ENCODE measurements at regions of chr12 and their contacts with region 1.

Region 1: DNA sequence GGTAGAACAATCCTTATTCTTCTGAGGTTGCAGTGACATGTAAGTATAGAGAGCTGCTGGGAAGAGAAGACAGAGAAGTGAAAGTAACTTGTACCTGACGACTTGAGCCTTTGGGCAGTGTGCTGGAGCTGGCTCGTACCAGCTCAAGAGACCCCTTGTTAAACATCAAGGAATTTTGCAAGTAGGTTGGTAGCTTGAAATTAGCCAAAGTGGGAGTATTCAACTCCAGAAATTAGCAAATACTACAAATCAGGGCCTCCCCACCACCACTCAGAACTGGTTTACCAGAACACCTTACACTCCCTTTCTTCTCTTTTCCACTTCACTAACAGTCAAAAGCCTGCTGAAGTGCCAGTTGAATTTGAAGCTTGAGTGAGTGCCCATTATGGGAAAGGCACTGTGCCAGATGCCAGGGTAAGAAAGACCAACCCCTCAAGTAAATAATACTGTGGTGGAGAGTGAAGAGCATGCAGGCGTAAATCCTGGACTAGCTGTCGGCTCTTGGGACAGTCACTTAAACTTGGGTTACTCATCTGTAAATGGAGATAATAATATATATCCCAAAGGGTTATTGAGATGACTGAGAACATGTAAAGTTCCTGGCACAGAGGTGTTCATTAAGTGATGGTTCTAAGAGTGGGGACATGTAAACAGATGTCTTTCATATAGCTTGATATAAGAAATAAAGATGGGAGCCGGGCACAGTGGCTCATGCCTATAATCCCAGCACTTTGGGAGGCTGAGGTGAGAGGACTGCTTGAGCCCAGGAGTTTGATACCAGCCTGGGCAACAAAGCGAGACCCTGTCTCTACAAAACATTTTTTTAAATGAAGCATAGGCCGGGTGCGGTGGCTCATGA is 27.0 kb upstream of the EID3 start:
- DNase-seq: no peak
- ATAC-seq: no peak
- H3K4me3 ChIP-seq: peak overlapping the region; percentile 10; the same call in 1 of the 2 replicates
- H3K27ac ChIP-seq: no peak overlapping the region; the same call in 1 of the 2 replicates
- H3K4me1 ChIP-seq: peaks cover 6% of the 10 kb centered on the region
- H3K27me3 ChIP-seq: no peaks in the 10 kb centered on the region
- CTCF ChIP-seq: no peak
- POLR2A ChIP-seq: no peak
- RAD21 ChIP-seq: no peak

Region 2: DNA sequence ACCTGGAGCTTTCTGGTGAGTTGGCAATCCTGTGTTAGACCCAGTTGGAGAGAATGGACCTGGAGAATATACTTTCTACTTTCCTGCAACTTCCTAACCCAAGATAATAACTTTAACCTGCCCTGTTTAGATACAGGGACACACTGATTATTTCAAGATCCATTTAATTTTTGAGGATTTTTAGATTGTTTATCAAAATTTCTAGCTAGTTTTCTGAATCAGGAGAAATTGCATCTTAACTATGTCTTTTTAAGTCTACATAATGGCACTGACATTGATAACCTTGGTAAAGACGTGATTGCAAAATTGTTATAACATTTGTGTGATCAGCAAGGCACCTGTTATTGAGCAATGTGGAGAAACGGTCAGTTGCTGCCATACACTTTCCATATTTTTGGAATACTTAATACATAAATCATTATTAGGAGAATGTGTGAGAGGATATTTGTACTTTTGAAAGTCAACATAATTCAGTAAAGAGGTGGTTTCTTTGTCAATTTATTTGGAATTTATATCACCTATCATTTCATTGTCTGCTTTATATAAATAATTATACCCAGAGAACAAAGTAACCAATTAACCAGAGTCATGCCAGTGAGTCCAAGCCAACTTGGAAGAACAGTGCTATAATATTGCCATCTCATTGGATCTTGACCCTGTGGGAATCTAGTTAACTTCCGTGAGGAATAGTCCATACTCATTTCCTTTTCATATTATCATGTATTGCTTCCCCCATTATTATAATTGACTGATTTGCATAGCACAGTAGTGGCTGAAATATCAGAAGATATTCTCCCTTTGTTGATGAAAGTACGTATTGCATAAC is 166.8 kb before region 1 on chr12:
- CTCF ChIA-PET with region 1: no interaction called
- POLR2A ChIA-PET with region 1: no interaction called
- dilution Hi-C with region 1: no loop called
- in situ Hi-C with region 1: no loop called
- intact Hi-C with region 1: no loop called
- DNase-seq: no peak
- ATAC-seq: no peak
- H3K4me3 ChIP-seq: no peak overlapping the region
- H3K27ac ChIP-seq: no peak overlapping the region
- H3K4me1 ChIP-seq: peaks cover 2% of the 10 kb centered on the region; the same call in 1 of the 2 replicates
- H3K27me3 ChIP-seq: no peaks in the 10 kb centered on the region
- CTCF ChIP-seq: no peak
- POLR2A ChIP-seq: no peak
- RAD21 ChIP-seq: no peak

Region 3: DNA sequence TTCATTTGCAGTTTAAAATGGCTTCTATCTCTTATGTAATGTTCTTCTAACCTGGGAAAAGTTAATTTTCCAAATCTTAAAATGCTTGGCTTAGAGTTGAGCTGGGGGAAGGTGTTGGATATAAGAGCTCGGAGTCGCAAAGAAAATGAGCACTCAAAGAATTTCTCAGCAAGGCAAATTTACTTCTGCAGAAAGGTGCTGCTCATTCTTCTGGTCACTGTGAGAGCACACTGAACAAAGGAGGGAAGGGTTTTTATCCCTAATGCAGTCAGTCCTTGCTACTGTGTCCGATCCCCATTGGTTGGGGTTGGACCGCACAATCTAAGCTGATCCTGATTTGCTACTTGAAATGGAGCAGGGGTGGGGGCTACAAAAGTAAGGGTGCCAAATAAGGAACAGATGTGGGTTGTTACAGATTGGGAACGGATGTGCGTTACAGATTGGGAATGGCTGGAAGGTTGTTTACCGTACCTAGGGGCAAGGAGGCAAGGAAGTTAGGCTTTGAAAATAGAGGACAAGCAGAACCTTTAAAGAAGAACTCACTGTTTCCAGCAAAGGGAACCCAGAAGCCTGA is 41.5 kb before region 1 on chr12:
- CTCF ChIA-PET with region 1: no interaction called
- POLR2A ChIA-PET with region 1: no interaction called
- dilution Hi-C with region 1: no loop called
- in situ Hi-C with region 1: no loop called
- intact Hi-C with region 1: loop called (anchors 5 kb)
- DNase-seq: no peak
- ATAC-seq: no peak
- H3K4me3 ChIP-seq: no peak overlapping the region
- H3K27ac ChIP-seq: no peak overlapping the region
- H3K4me1 ChIP-seq: no peaks in the 10 kb centered on the region
- H3K27me3 ChIP-seq: no peaks in the 10 kb centered on the region
- CTCF ChIP-seq: no peak
- POLR2A ChIP-seq: no peak
- RAD21 ChIP-seq: no peak

Measured in IMR-90 (cell line).